ENCODE measurements at regions of chr2 and their contacts with region 1.

Region 1: GRCh38 chr2:152499896-152500735 is 165.1 kb downstream of the FMNL2 start:
- DNase-seq: no peak
- H3K4me3 Mint-ChIP-seq: no peak overlapping the region
- H3K27ac Mint-ChIP-seq: no peak overlapping the region
- H3K4me1 Mint-ChIP-seq: peaks cover 76% of the 10 kb centered on the region
- H3K27me3 Mint-ChIP-seq: no peaks in the 10 kb centered on the region
- CTCF ChIP-seq: no peak

Region 2: DNA sequence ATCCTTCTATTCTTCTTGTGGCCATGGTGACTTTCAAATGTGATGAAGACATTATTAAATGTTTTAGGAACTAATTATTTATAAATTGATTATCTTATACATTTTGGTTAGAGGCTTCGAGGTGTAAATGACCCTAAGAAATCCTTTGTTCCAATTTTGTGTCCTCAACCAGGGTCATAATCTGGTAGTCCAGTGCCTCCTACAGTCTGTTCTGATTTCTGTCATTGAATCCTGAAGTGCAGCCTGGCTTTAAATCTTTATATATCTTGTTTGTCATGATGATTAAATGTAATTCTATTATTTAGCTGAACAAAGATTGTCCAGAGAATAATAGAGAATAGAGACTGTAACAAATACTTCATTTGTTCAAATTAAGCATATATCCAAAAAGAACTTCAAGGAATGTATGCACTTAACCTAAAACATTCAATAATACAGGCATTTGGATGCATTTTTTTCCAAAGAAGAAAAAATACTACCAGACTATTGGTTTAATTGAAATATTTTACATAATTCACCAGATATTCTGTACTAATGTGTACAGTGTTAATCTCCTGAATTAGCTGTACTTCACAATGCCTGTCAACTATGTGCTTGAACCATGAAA is 127.3 kb after region 1 on chr2:
- CTCF ChIA-PET with region 1: no interaction called
- intact Hi-C with region 1: loop called (anchors 10 kb)
- DNase-seq: peak; percentile 21
- H3K4me3 Mint-ChIP-seq: no peak overlapping the region
- H3K27ac Mint-ChIP-seq: no peak overlapping the region
- H3K4me1 Mint-ChIP-seq: no peaks in the 10 kb centered on the region
- H3K27me3 Mint-ChIP-seq: no peaks in the 10 kb centered on the region
- CTCF ChIP-seq: no peak

Region 3: GRCh38 chr2:152717228-152718075 is 217.3 kb after region 1 on chr2 and contains the start of gene PRPF40A:
- CTCF ChIA-PET with region 1: no interaction called
- intact Hi-C with region 1: no loop called
- DNase-seq: peak; percentile 99
- H3K4me3 Mint-ChIP-seq: peak within 1 kb of the TSS; percentile 96
- H3K27ac Mint-ChIP-seq: peak within 1 kb of the TSS; percentile 96
- H3K4me1 Mint-ChIP-seq: peaks cover 9% of the 10 kb centered on the region
- H3K27me3 Mint-ChIP-seq: no peaks in the 10 kb centered on the region
- CTCF ChIP-seq: no peak
- total RNA-seq, gene PRPF40A: 118 and 140 TPM in 2 replicates

Measured in Calu3 (cell line).